Tibial artery (tissue), 4 donors: ENCODE measurements at regions of chr18 and their contacts with region 1.

Region 1: GRCh38 chr18:62522504-62523254 is at the start of gene ZCCHC2:
- DNase-seq: peak; percentile 96 to 99
- H3K4me3 ChIP-seq: peak within 1 kb of the TSS; percentile 98
- H3K27ac ChIP-seq: peak within 1 kb of the TSS; percentile 99 to 100
- H3K4me1 ChIP-seq: peaks cover 0 to 22% (median 10%) of the 10 kb centered on the region in 4 donors
- H3K27me3 ChIP-seq: no peaks in the 10 kb centered on the region
- CTCF ChIP-seq: no peak

Region 2: GRCh38 chr18:61738488-61738887 is 784.2 kb before region 1 on chr18:
- intact Hi-C with region 1: loop called (anchors 10 kb)
- DNase-seq: peak; percentile 54 to 85
- H3K4me3 ChIP-seq: no peak overlapping the region
- H3K27ac ChIP-seq: peak overlapping the region; percentile 92 to 94
- H3K4me1 ChIP-seq: peaks cover 0 to 99% (median 52%) of the 10 kb centered on the region in 4 donors
- H3K27me3 ChIP-seq: no peaks in the 10 kb centered on the region
- CTCF ChIP-seq: no peak

Region 3: DNA sequence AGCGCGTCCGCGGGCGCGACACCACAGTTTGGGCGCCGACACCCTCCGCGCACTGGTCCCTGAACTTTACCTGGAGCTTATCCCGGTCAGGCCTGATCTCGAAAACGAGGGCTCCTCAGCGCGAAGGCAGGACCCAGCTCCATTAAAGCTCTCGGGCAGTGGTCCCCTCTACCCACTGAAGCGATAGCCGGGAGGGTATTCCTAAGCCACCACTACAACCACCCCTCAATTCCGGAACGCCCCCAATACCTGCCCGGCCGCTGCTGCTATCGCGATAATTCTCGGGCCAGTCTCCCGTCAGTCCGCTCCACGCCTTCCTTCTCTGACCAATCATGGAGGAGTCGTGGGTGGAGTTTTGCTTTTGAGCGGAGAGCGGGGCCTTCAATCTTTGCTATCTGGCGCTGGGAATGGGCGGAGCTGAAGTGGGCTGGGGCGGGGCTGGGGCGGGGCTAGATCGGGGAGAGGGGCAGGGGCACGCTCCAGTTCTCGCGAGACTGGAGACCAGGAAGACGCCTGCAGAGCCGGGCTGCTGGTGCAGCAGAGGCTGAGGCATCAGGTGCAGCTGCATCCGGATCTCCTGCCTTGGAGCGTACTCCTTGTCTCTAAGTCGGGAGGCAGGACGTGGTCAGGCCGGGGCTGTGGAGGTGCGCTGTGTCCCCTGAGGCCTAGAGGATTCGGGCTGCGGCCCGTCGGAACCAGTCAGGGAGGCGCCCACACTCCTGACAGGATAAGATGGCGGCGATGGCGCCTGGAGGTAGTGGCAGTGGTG is 335.7 kb before region 1 on chr18 and contains the starts of genes PIGN and RELCH:
- intact Hi-C with region 1: loop called (anchors 10 kb)
- DNase-seq: peak; percentile 97 to 98
- H3K4me3 ChIP-seq: peak within 1 kb of the TSS; percentile 81 to 91
- H3K27ac ChIP-seq: peak within 1 kb of the TSS; percentile 83 to 89
- H3K4me1 ChIP-seq: peaks cover 0 to 48% (median 28%) of the 10 kb centered on the region in 4 donors
- H3K27me3 ChIP-seq: no peaks in the 10 kb centered on the region
- CTCF ChIP-seq: peak in 1 of 2 experiments; percentile 13

Region 4: DNA sequence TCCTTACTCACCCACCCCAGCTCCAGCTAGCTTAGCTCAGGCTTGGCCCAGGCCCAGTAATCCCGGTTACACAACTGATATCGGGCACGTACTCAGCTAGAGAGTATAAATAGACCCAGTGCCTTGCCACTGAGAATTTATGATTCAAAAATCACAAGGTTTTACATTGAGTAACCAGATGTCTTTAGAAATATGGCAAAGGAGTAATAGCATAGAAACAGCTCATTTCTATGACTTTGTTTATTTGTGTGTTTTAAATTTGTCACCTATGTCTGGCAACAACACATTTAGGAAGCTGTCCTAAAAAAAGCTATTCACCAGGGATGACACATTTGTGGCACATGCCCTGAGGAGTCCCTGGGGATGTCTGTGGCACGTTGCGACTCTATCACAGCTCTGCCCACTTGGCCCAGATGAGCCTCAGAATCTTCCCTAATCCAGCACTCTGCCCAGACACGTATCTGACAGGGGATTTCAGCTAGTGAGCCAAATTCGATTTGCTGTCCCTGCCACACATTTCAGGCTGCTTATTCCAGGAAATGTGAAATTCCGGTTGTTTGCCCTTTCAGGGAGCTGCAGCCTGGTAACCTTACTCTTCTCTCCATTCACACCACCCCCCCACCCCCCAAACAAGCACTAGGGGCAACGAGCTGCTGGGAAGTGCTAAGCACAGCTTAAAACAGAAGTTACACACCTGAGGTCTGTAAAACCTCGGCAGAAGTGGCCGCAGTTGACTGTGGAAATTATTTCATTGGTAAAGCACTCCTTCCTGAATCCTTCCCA is 85.3 kb before region 1 on chr18:
- intact Hi-C with region 1: loop called (anchors 2 kb)
- DNase-seq: peak; percentile 96 to 98
- H3K4me3 ChIP-seq: peak overlapping the region; percentile 18 to 35
- H3K27ac ChIP-seq: peak overlapping the region; percentile 87 to 91
- H3K4me1 ChIP-seq: peaks cover 0 to 27% (median 27%) of the 10 kb centered on the region in 4 donors
- H3K27me3 ChIP-seq: no peaks in the 10 kb centered on the region
- CTCF ChIP-seq: no peak

Region 5: GRCh38 chr18:62596145-62597005 is 73.7 kb after region 1 on chr18:
- intact Hi-C with region 1: no loop called
- DNase-seq: no peak
- H3K4me3 ChIP-seq: peak overlapping the region; percentile 23 to 44
- H3K27ac ChIP-seq: no peak overlapping the region
- H3K4me1 ChIP-seq: peaks cover 0 to 16% (median 13%) of the 10 kb centered on the region in 4 donors
- H3K27me3 ChIP-seq: peaks cover 0 to 44% of the 10 kb centered on the region in 2 donors
- CTCF ChIP-seq: no peak

Region 6: DNA sequence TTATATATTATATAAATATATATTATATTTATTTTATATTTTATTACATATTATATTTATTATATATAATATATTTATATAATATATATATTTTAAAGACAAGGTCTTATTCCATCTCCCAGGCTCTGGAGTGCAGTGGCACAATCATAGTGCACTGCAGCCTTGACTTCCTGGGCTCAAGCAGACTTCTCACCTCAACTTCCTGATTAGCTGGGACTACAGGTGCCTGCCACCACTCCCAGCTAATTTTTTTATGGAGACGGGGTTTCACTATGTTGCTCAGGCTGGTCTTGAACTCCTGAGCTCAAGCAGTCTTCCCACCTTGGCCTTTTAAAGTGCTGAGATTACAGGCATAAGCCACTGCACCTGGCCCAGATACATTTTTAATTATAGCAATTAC is 302.7 kb after region 1 on chr18:
- intact Hi-C with region 1: no loop called
- DNase-seq: no peak
- H3K4me3 ChIP-seq: no peak overlapping the region
- H3K27ac ChIP-seq: no peak overlapping the region
- H3K4me1 ChIP-seq: peaks cover 0 to 20% (median 9%) of the 10 kb centered on the region in 4 donors
- H3K27me3 ChIP-seq: no peaks in the 10 kb centered on the region
- CTCF ChIP-seq: no peak

Region 7: GRCh38 chr18:63422087-63422809 is 899.6 kb after region 1 on chr18 and contains the start of gene VPS4B:
- intact Hi-C with region 1: loop called (anchors 10 kb)
- DNase-seq: peak; percentile 99 to 100
- H3K4me3 ChIP-seq: peak within 1 kb of the TSS; percentile 78 to 90
- H3K27ac ChIP-seq: peak within 1 kb of the TSS; percentile 90 to 95
- H3K4me1 ChIP-seq: peaks cover 0 to 39% (median 18%) of the 10 kb centered on the region in 4 donors
- H3K27me3 ChIP-seq: no peaks in the 10 kb centered on the region
- CTCF ChIP-seq: no peak